ENCODE measurements at regions of chr20 and their contacts with region 1.

Region 1: DNA sequence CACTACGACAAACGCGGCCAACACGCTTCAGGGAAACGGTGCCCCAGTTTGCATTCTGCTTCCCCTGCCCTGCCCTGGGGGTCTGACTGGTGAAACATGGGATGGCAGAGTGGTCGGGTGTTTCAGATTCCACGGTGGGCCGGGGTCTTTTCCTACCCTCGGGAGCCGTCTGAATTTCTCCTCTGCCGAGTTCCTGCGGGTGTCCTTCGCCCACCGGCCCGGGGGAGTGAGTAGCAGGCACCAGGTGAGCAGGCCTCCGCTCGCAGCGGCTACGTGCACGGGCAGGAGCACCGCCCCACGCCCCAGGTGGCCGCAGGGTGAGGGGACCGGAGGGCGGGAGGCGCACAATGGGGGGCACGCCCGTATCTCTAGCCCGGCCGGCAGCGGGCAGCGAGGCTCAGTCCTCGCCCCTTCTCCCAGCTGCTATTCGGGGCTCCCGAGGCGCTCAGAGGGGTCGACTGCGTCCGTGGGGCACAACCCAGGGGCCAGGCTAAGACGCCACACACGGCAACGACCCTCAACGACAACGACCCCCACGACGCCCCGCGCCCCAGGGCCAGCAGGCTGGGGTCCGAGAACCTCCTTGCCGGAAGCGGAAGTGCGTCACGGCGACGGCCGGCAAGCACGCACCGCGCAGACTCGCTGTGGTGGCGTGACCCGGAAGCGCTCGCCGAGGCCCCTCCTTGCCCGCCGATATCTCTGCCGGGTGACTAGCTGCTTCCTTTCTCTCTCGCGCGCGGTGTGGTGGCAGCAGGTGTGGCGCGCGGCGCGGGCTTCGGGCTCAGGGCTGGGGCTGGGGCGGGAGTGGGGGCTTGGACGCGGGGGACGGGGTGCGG is at the start of gene RPS21:
- DNase-seq: peak; percentile 95
- ATAC-seq: peak; percentile 94
- H3K4me3 Mint-ChIP-seq: peak within 1 kb of the TSS; percentile 92
- H3K27ac Mint-ChIP-seq: peak within 1 kb of the TSS; percentile 92
- H3K4me1 Mint-ChIP-seq: peaks cover 51% of the 10 kb centered on the region
- H3K27me3 Mint-ChIP-seq: no peaks in the 10 kb centered on the region
- total RNA-seq, gene RPS21: 1,634 to 1,703 TPM

Region 2: DNA sequence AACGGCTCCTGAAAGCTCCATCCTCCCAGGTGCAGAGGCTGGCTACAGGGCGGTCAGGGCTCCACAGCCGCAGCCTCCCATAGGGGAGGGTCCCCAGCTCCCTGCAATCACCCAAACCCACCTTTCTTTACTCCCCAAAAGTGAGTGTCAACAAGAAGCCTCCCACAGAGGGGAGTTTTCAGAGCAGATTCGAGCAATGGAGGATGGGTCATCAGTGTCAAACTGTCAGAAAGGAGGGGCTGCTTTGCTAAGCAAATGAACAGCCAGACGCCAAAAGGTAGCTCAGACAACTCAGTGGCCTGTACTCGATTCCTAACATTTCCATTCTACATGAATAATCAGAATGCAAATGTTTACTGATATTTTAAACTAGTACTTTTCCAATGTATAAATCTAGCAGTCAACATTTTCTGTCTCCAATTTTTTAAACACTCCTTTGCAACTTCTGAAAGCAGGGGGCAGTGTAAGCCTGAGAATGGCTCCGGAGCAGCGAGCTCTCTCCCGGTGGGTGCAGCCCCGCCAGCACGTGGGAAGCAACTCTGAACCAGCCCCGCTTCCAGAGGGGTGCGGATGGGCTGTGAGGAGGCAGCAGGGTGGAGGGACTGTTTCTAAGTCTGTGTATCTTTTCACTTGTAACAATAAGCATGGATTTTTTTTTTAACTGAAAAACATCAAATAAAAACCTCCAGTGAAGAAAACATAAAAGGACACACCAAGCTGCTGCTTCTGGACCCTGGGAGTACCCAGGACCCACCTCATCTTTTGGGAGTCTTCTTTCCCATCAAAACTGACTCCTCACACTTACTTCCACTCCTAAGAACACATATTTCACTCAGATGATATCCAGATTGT is 375.8 kb before region 1 on chr20:
- CTCF ChIA-PET with region 1: interaction called, 11 read pairs
- DNase-seq: peak; percentile 66
- ATAC-seq: peak; percentile 75
- H3K4me3 Mint-ChIP-seq: no peak overlapping the region
- H3K27ac Mint-ChIP-seq: peak overlapping the region; percentile 16
- H3K4me1 Mint-ChIP-seq: peaks cover 5% of the 10 kb centered on the region
- H3K27me3 Mint-ChIP-seq: no peaks in the 10 kb centered on the region

Region 3: GRCh38 chr20:62237801-62238571 is 148.6 kb before region 1 on chr20 and contains the start of gene OSBPL2:
- CTCF ChIA-PET with region 1: no interaction called
- DNase-seq: peak; percentile 100
- ATAC-seq: peak; percentile 99
- H3K4me3 Mint-ChIP-seq: peak within 1 kb of the TSS; percentile 74
- H3K27ac Mint-ChIP-seq: peak within 1 kb of the TSS; percentile 88
- H3K4me1 Mint-ChIP-seq: peaks cover 30% of the 10 kb centered on the region
- H3K27me3 Mint-ChIP-seq: no peaks in the 10 kb centered on the region
- total RNA-seq, gene OSBPL2: 27.1 TPM

Region 4: DNA sequence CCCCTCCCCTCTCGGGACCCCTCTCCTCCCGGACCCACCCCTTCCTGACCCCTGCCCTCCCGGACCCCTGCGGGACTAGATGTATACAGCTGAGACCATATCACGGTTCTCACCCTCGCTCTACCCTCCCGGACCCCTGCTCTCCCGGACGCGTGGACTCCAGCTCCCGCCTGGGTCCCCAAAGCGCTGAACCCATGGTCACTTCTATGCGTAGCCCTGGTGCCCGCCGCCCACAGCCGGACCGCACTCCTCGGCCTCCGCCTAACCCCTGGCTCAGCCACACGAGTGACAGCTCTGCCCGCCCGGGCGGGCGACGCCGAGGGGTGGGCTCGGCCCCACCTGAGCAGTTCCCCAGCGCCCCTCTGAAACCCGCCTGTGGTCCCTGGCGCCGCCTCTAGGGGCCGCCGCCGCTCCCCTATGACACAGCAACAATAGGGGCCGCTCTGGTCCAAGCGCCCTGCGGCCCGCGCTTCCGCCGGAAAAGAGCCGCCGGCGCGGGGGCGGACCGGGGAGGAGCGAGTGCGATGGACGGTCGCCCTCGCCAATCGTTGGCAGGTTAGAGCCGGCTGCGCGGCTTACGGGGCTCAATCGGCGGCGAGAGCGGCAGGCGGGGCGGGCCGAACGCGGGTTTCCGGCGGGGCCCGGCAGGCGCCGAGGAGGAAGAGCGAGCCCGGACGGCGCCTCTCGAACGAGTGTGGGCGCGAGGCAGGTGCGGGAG is 84.1 kb before region 1 on chr20 and contains the start of gene ADRM1:
- CTCF ChIA-PET with region 1: interaction called, 11 read pairs
- DNase-seq: peak; percentile 97
- ATAC-seq: peak; percentile 88
- H3K4me3 Mint-ChIP-seq: peak within 1 kb of the TSS; percentile 89
- H3K27ac Mint-ChIP-seq: peak within 1 kb of the TSS; percentile 98
- H3K4me1 Mint-ChIP-seq: peaks cover 28% of the 10 kb centered on the region
- H3K27me3 Mint-ChIP-seq: no peaks in the 10 kb centered on the region
- total RNA-seq, gene ADRM1: 105 to 133 TPM

Region 5: GRCh38 chr20:62454904-62455636 is 68.5 kb after region 1 on chr20:
- CTCF ChIA-PET with region 1: no interaction called
- DNase-seq: no peak
- ATAC-seq: no peak
- H3K4me3 Mint-ChIP-seq: no peak overlapping the region
- H3K27ac Mint-ChIP-seq: no peak overlapping the region
- H3K4me1 Mint-ChIP-seq: no peaks in the 10 kb centered on the region
- H3K27me3 Mint-ChIP-seq: peaks cover 2% of the 10 kb centered on the region